MCF 10A (cell line): ENCODE measurements at regions of chr9 and their contacts with region 1.

Region 1: GRCh38 chr9:32579706-32580331 is 6.9 kb upstream of the NDUFB6 start:
- DNase-seq: peak; percentile 73
- H3K4me3 Mint-ChIP-seq: peak overlapping the region; percentile 49
- H3K27ac Mint-ChIP-seq: no peak overlapping the region
- H3K4me1 Mint-ChIP-seq: no peaks in the 10 kb centered on the region
- H3K27me3 Mint-ChIP-seq: no peaks in the 10 kb centered on the region
- CTCF ChIP-seq: peak; percentile 79

Region 2: GRCh38 chr9:31608416-31608815 is 971.4 kb before region 1 on chr9:
- CTCF ChIA-PET with region 1: no interaction called
- POLR2A ChIA-PET with region 1: no interaction called
- intact Hi-C with region 1: no loop called
- DNase-seq: peak; percentile 23
- H3K4me3 Mint-ChIP-seq: no peak overlapping the region
- H3K27ac Mint-ChIP-seq: no peak overlapping the region
- H3K4me1 Mint-ChIP-seq: peaks cover 18% of the 10 kb centered on the region
- H3K27me3 Mint-ChIP-seq: no peaks in the 10 kb centered on the region
- CTCF ChIP-seq: no peak

Region 3: GRCh38 chr9:32384364-32385151 is 195.3 kb before region 1 on chr9 and contains the start of gene ACO1:
- CTCF ChIA-PET with region 1: interaction called, 601 read pairs
- POLR2A ChIA-PET with region 1: interaction called, 49 read pairs
- intact Hi-C with region 1: no loop called
- DNase-seq: peak; percentile 83
- H3K4me3 Mint-ChIP-seq: peak within 1 kb of the TSS; percentile 84
- H3K27ac Mint-ChIP-seq: peak within 1 kb of the TSS; percentile 3
- H3K4me1 Mint-ChIP-seq: peaks cover 8% of the 10 kb centered on the region
- H3K27me3 Mint-ChIP-seq: peaks cover 14% of the 10 kb centered on the region
- CTCF ChIP-seq: no peak
- total RNA-seq, gene ACO1: 28.6 and 31.4 TPM in 2 replicates

Region 4: DNA sequence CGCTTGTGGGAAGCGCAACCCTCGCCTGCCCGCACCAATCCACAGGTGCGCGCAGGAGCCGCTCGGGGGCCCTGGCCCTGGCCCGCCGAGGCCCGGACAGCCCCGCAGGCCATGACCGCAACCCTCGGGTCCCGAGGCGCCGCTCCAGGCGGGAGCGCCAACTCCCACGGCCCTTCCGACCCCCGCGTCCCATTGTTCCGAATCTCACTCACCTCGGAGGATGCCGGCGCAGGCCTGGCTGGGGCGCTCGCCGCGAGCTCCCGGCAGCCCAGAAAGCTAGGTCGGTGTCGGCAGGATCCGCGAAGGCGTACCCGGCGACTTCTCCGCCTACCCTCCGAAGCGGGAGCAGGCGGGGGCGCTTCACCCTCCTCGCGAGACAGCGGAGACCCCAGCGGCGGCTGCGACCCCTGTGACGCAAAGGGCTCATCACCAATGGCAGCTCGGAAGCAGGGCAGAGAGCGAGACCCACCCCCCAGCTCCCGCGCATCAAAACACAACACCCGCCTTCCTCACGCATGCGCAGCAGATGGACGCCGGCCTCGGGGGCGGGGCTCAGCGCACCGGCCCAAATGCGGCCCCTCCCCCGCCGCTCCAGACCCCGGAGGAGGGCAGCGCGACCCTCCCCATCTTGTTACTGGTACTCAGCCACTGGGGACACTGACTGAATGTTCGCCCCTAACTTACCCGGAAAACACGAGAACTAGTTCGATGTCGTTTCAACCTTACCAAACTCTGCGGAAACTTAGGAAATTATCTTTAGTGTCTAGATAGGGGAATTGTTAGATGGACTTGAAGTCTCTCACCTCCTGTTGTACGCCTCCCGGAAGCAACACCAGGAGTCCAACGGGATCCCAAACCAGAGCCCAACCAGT is 29.0 kb before region 1 on chr9:
- CTCF ChIA-PET with region 1: interaction called, 15 read pairs
- POLR2A ChIA-PET with region 1: no interaction called
- intact Hi-C with region 1: no loop called
- DNase-seq: peak; percentile 86
- H3K4me3 Mint-ChIP-seq: peak overlapping the region; percentile 98
- H3K27ac Mint-ChIP-seq: peak overlapping the region; percentile 94
- H3K4me1 Mint-ChIP-seq: peaks cover 13% of the 10 kb centered on the region
- H3K27me3 Mint-ChIP-seq: no peaks in the 10 kb centered on the region
- CTCF ChIP-seq: no peak

Region 5: GRCh38 chr9:32942755-32943460 is 363.1 kb after region 1 on chr9:
- CTCF ChIA-PET with region 1: interaction called, 10 read pairs
- POLR2A ChIA-PET with region 1: no interaction called
- intact Hi-C with region 1: no loop called
- DNase-seq: no peak
- H3K4me3 Mint-ChIP-seq: no peak overlapping the region
- H3K27ac Mint-ChIP-seq: no peak overlapping the region
- H3K4me1 Mint-ChIP-seq: no peaks in the 10 kb centered on the region
- H3K27me3 Mint-ChIP-seq: no peaks in the 10 kb centered on the region
- CTCF ChIP-seq: no peak

Region 6: DNA sequence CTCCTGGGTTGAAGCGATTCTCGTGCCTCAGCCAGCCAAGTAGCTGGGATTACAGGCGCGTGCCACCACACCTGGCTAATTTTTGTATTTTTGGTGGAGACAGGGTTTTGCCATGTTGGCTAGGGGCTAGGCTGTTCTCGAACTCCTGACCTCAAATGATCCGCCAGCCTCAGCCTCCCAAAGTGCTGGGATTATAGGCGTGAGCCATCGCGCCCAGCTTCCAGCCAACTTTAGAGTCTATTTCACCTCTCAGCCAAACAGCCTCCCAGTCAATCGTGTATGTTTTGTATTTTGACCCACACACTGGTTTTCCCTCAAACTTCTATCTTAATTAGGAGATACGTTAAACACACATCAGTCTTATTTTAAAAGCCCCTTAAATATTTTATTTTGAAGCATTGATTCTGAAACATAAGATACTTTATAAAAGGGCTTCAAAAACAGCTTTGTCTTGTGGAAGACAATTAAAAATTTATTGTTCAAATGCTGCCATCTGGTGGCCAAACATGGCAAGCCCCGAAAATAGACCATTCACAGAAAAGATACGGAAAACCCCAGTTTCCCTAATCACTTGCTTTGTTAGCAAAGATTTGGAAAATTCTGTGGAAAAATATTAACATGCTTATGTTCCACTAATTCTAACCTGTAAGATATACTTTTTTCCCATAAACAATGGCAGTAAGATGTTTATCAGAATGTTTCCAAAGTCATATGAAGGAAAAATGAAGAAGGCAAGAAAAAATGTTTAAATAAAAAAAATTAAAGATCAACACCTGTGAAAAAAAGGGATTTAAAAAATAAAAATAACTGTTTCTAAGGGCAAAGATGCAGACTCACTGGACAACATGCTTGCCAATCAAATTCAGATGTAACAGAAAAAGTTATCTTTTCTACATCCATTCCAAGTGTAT is 388.5 kb after region 1 on chr9:
- CTCF ChIA-PET with region 1: interaction called, 264 read pairs
- POLR2A ChIA-PET with region 1: interaction called, 25 read pairs
- intact Hi-C with region 1: loop called (anchors 1 kb)
- DNase-seq: peak; percentile 59
- H3K4me3 Mint-ChIP-seq: no peak overlapping the region
- H3K27ac Mint-ChIP-seq: no peak overlapping the region
- H3K4me1 Mint-ChIP-seq: no peaks in the 10 kb centered on the region
- H3K27me3 Mint-ChIP-seq: no peaks in the 10 kb centered on the region
- CTCF ChIP-seq: peak; percentile 54

Region 7: GRCh38 chr9:33225319-33226149 is 645.7 kb after region 1 on chr9:
- CTCF ChIA-PET with region 1: no interaction called
- POLR2A ChIA-PET with region 1: no interaction called
- intact Hi-C with region 1: loop called (anchors 10 kb)
- DNase-seq: peak; percentile 83
- H3K4me3 Mint-ChIP-seq: no peak overlapping the region
- H3K27ac Mint-ChIP-seq: no peak overlapping the region
- H3K4me1 Mint-ChIP-seq: peaks cover 33% of the 10 kb centered on the region
- H3K27me3 Mint-ChIP-seq: no peaks in the 10 kb centered on the region
- CTCF ChIP-seq: peak; percentile 52